Left cardiac atrium (tissue), 4 donors: ENCODE measurements at regions of chr19 and their contacts with region 1.

Region 1: GRCh38 chr19:10870955-10871603 is at the start of gene CARM1:
- DNase-seq: peak; percentile 99
- ATAC-seq: peak; percentile 96 to 97
- total RNA-seq, gene CARM1: 31.9 to 32.4 TPM

Region 2: GRCh38 chr19:10769533-10770491 is 101.3 kb before region 1 on chr19:
- intact Hi-C with region 1: loop called in 1 of 2 experiments (anchors 5 kb)
- DNase-seq: peak; percentile 69
- ATAC-seq: peak; percentile 78 to 83

Region 3: DNA sequence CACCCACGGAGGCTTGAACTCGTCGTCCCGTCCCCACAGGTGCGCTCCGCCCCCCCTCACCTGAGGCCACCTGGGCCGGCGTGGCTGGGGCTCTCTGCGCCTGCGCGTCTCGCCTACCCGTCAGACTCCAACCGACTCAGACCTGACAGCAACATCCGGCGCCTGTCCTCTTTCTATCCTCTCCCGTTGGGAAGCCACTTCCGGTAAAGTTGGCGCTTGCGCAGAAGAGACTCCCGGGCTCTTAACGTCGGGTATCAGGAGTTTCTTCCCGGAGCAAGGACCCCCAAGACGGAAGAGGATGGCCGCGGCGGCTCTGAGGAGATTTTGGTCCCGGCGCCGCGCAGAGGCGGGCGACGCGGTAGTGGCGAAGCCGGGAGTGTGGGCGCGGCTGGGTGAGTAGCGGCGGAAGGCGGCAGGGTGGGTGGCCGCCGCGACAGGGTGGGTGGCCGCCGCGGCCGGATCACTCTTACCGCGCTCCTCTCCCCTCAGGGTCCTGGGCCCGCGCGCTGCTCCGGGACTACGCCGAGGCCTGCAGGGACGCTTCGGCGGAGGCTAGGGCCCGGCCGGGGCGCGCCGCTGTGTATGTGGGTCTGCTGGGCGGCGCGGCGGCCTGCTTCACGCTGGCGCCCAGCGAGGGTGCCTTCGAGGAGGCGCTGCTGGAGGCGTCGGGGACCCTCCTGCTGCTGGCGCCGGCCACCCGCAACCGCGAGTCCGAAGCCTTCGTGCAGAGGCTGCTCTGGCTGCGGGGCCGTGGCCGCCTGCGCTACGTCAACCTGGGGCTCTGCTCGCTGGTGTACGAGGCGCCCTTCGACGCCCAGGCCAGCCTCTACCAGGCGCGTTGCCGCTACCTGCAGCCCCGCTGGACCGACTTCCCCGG is 57.7 kb after region 1 on chr19 and contains the starts of genes TIMM29 and YIPF2:
- intact Hi-C with region 1: loop called in 1 of 2 experiments (anchors 10 kb)
- DNase-seq: peak; percentile 98
- ATAC-seq: peak; percentile 96 to 97
- total RNA-seq, gene TIMM29: 12.7 to 15.1 TPM
- total RNA-seq, gene YIPF2: 26.5 to 31.8 TPM

Region 4: GRCh38 chr19:10968527-10969135 is 97.6 kb after region 1 on chr19:
- intact Hi-C with region 1: no loop called
- DNase-seq: no peak
- ATAC-seq: no peak